ENCODE measurements at regions of chr4 and their contacts with region 1.

Region 1: DNA sequence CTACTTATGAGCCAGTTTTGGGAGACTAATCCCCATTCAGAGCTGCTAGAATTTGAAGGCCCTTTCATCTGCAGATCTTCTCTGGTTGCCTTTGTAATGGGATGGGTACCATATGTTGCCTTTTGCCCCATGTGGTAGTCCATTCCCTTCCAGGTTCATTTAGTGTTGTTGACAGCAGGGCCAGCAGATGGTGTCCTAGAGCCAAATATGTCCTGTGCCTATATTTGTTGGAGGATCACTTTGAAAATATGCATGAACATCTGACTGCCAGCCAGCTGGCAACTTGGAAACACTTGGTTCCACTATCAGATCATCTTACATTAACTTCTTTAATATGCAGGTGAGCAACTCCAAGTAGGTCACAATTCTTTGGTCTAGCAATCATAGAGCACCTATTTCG is 30.4 kb downstream of the CFAP299 start:
- DNase-seq: peak; percentile 64
- ATAC-seq: peak; percentile 71
- H3K4me3 Mint-ChIP-seq: no peak overlapping the region
- H3K27ac Mint-ChIP-seq: no peak overlapping the region
- H3K4me1 Mint-ChIP-seq: no peaks in the 10 kb centered on the region
- H3K27me3 Mint-ChIP-seq: peaks cover 2% of the 10 kb centered on the region

Region 2: GRCh38 chr4:80393246-80393969 is 27.5 kb after region 1 on chr4:
- CTCF ChIA-PET with region 1: no interaction called
- POLR2A ChIA-PET with region 1: no interaction called
- DNase-seq: no peak
- ATAC-seq: no peak
- H3K4me3 Mint-ChIP-seq: no peak overlapping the region
- H3K27ac Mint-ChIP-seq: no peak overlapping the region
- H3K4me1 Mint-ChIP-seq: no peaks in the 10 kb centered on the region
- H3K27me3 Mint-ChIP-seq: no peaks in the 10 kb centered on the region

Region 3: GRCh38 chr4:80989921-80990544 is 624.1 kb after region 1 on chr4:
- CTCF ChIA-PET with region 1: interaction called, 13 read pairs
- POLR2A ChIA-PET with region 1: interaction called, 3 read pairs
- DNase-seq: peak; percentile 30
- ATAC-seq: peak; percentile 36
- H3K4me3 Mint-ChIP-seq: no peak overlapping the region
- H3K27ac Mint-ChIP-seq: no peak overlapping the region
- H3K4me1 Mint-ChIP-seq: no peaks in the 10 kb centered on the region
- H3K27me3 Mint-ChIP-seq: no peaks in the 10 kb centered on the region

Region 4: DNA sequence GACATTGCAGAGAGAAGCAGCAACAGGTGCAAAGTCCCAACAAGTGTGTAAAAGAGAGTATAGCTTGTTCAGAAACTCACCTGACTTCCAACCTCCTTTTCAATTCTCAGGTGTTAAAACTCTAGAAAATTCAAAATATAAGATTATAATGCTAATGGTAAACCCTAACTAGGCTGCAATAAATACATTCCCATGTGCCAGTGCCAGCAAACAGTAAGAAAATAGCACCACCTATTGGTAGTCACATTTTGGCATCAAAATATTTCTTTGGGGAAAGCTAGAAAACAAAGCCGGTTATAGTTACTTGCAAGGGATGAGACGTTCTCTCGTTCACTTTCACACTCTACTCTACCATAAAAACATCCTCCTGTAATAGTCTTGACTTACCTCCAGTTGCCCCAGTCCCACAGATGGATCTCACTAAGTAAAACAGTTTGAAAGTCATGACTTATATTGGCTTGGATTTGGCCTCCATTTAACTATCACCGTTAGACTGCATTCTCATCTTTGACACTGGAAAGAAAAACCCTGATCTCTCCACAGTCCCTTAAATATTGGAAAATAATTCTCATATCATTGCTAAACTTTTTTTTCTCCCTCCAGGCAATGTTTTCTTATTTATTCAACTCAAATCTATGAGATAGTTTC is 674.2 kb after region 1 on chr4:
- CTCF ChIA-PET with region 1: interaction called, 11 read pairs
- POLR2A ChIA-PET with region 1: no interaction called
- DNase-seq: no peak
- ATAC-seq: no peak
- H3K4me3 Mint-ChIP-seq: no peak overlapping the region
- H3K27ac Mint-ChIP-seq: no peak overlapping the region
- H3K4me1 Mint-ChIP-seq: no peaks in the 10 kb centered on the region
- H3K27me3 Mint-ChIP-seq: peaks cover 18% of the 10 kb centered on the region

Measured in activated CD8-positive, alpha-beta T cell treated with anti-CD3 and anti-CD28 coated beads, Interleukin-2, amount 10 ng/mL, durations not matched to agents 7 days and 5 days (primary cell).